Caco-2 (cell line): ENCODE measurements at regions of chr22 and their contacts with region 1.

Region 1: GRCh38 chr22:28829358-28830181 is 29.2 kb upstream of the XBP1 start:
- DNase-seq: peak; percentile 70 to 80
- H3K4me3 ChIP-seq: no peak overlapping the region
- H3K4me3 Mint-ChIP-seq: no peak overlapping the region
- H3K27ac Mint-ChIP-seq: no peak overlapping the region
- H3K4me1 ChIP-seq: 0 out of 2 replicates have a peak, but pooled peaks cover 5% of the 10 kb centered on the region
- H3K4me1 Mint-ChIP-seq: peaks cover 9% of the 10 kb centered on the region
- H3K27me3 ChIP-seq: no peaks in the 10 kb centered on the region
- H3K27me3 Mint-ChIP-seq: no peaks in the 10 kb centered on the region
- CTCF ChIP-seq: peak; percentile 93 to 97

Region 2: DNA sequence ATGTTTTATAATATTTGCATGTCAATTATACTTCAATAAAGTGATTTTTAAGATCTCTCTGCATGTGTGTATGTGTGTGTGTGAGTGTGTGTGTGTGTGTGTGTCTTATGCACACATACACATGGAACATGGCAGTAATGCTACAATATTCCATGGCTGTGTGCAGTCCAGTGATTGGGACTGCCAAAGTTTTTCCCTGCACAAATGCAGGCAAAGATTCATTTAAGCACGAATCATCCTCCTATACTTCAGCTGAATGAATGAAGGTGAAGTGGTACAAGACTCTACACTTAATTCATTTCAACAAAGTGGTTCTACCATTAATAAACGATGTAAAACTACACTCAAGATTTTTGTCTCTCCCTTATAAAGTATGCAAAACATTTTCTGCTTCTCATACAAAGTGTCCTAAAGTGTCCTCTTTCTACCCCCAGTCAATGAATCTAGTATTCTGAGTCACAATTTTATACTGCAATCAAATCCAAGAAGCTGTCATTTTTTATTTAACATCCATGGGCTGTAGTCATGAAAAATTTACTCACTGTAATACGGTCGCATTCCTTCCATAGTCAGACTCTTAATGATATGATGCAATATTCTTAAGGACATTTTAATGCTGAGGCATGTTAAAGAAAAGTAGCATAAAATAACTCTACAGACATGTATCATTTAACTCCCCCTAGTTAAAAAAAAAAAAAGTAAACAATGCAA is 282.3 kb before region 1 on chr22:
- CTCF ChIA-PET with region 1: no interaction called
- POLR2A ChIA-PET with region 1: no interaction called
- intact Hi-C with region 1: no loop called
- DNase-seq: no peak
- H3K4me3 ChIP-seq: no peak overlapping the region
- H3K4me3 Mint-ChIP-seq: no peak overlapping the region
- H3K27ac Mint-ChIP-seq: no peak overlapping the region
- H3K4me1 ChIP-seq: peaks cover 14% of the 10 kb centered on the region
- H3K4me1 Mint-ChIP-seq: peaks cover 22% of the 10 kb centered on the region
- H3K27me3 ChIP-seq: no peaks in the 10 kb centered on the region
- H3K27me3 Mint-ChIP-seq: no peaks in the 10 kb centered on the region
- CTCF ChIP-seq: no peak

Region 3: DNA sequence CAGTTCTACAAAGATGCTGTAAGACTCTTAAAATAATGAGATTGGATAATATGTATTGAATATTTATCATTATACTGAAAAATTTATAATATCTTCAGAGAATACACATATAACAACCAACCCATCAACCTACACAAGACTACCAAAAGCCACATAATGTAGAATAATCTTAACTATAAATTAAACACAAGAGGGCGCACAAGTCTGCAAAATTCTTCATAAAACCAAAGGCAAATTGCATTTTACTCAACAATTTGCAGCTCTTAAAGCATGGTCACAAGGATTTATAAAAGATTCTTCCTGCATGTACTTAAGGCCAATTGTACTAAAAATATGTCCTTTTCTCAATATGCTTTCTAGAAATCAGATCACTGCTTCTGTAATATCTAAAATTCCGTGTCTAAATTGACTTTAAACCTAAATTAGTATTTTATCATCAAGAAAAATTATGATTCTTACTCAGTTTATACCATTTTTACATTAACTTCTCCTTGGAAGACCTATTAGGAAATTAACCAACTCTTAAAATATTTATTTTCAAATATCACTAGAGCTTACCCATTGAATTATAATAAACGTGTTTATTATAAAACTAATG is 228.9 kb before region 1 on chr22:
- CTCF ChIA-PET with region 1: interaction called, 3 read pairs
- POLR2A ChIA-PET with region 1: no interaction called
- intact Hi-C with region 1: loop called (anchors 1 kb)
- DNase-seq: peak in 1 of 2 experiments; percentile 44
- H3K4me3 ChIP-seq: no peak overlapping the region
- H3K4me3 Mint-ChIP-seq: no peak overlapping the region
- H3K27ac Mint-ChIP-seq: no peak overlapping the region
- H3K4me1 ChIP-seq: no peaks in the 10 kb centered on the region
- H3K4me1 Mint-ChIP-seq: no peaks in the 10 kb centered on the region
- H3K27me3 ChIP-seq: no peaks in the 10 kb centered on the region
- H3K27me3 Mint-ChIP-seq: peaks cover 6% of the 10 kb centered on the region
- CTCF ChIP-seq: peak; percentile 41 to 66

Region 4: GRCh38 chr22:28741758-28742561 is 87.6 kb before region 1 on chr22 and contains the starts of genes CHEK2 and HSCB:
- CTCF ChIA-PET with region 1: no interaction called
- POLR2A ChIA-PET with region 1: no interaction called
- intact Hi-C with region 1: loop called (anchors 5 kb)
- DNase-seq: peak; percentile 98 to 99
- H3K4me3 ChIP-seq: peak within 1 kb of the TSS; percentile 72
- H3K4me3 Mint-ChIP-seq: peak within 1 kb of the TSS; percentile 90
- H3K27ac Mint-ChIP-seq: peak within 1 kb of the TSS; percentile 77
- H3K4me1 ChIP-seq: 0 out of 2 replicates have a peak, but pooled peaks cover 5% of the 10 kb centered on the region
- H3K4me1 Mint-ChIP-seq: peaks cover 14% of the 10 kb centered on the region
- H3K27me3 ChIP-seq: no peaks in the 10 kb centered on the region
- H3K27me3 Mint-ChIP-seq: no peaks in the 10 kb centered on the region
- CTCF ChIP-seq: peak in 1 of 2 experiments; percentile 20
- total RNA-seq, gene CHEK2: 34.0 and 38.0 TPM in 2 replicates
- total RNA-seq, gene HSCB: 8.2 and 11.4 TPM in 2 replicates

Region 5: DNA sequence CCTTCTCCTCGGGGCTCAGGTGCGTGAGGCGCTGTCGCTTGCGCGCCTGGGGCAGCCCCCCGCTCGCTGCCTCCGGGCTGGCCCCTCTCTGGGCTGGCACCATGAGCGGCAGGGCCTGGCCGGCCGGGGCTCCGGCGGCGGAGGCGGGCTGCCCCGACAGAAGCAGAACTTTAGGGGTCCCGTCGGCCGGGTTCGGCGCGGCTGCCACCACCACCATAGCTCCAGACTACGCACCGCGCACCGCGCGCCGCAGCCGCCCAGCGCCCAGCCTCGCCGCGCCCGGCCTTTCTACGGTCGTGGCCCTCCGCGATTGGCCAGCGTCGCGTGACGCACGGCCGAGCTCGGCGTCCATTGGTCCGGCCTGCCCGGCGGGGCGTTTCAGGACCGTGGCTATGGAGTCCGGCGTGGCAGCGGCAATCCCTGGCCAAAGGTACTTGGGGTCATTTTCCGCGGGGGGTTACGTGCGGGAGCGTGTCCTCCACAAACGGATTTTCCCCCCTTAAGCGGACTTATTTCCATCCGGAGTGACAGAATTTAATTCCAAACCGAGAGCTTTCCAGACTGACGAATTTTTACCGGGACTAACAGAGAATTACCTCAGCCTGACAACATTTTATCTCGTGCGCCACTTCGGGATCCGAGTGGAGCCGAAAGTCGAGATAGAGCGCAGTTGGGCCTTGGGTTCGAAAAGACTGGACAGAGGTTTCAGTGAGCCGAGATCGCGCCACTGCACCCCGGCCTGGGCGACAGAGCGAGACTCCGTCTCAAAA is 29.1 kb before region 1 on chr22 and contains the start of gene XBP1:
- CTCF ChIA-PET with region 1: interaction called, 11 read pairs
- POLR2A ChIA-PET with region 1: interaction called, 4 read pairs
- intact Hi-C with region 1: loop called (anchors 1 kb)
- DNase-seq: peak; percentile 92 to 96
- H3K4me3 ChIP-seq: peak within 1 kb of the TSS; percentile 94
- H3K4me3 Mint-ChIP-seq: peak within 1 kb of the TSS; percentile 93
- H3K27ac Mint-ChIP-seq: peak within 1 kb of the TSS; percentile 99
- H3K4me1 ChIP-seq: peaks cover 17% of the 10 kb centered on the region
- H3K4me1 Mint-ChIP-seq: peaks cover 19% of the 10 kb centered on the region
- H3K27me3 ChIP-seq: no peaks in the 10 kb centered on the region
- H3K27me3 Mint-ChIP-seq: no peaks in the 10 kb centered on the region
- CTCF ChIP-seq: no peak
- total RNA-seq, gene XBP1: 215 and 225 TPM in 2 replicates

Region 6: GRCh38 chr22:28810821-28811491 is 18.6 kb before region 1 on chr22:
- CTCF ChIA-PET with region 1: interaction called, 7 read pairs
- POLR2A ChIA-PET with region 1: no interaction called
- intact Hi-C with region 1: loop called (anchors 2 kb)
- DNase-seq: peak in 1 of 2 experiments; percentile 30
- H3K4me3 ChIP-seq: no peak overlapping the region
- H3K4me3 Mint-ChIP-seq: no peak overlapping the region
- H3K27ac Mint-ChIP-seq: peak overlapping the region; percentile 12
- H3K4me1 ChIP-seq: peaks cover 78% of the 10 kb centered on the region
- H3K4me1 Mint-ChIP-seq: peaks cover 33% of the 10 kb centered on the region
- H3K27me3 ChIP-seq: no peaks in the 10 kb centered on the region
- H3K27me3 Mint-ChIP-seq: no peaks in the 10 kb centered on the region
- CTCF ChIP-seq: no peak

Region 7: GRCh38 chr22:28817919-28818909 is 11.4 kb before region 1 on chr22:
- CTCF ChIA-PET with region 1: interaction called, 13 read pairs
- POLR2A ChIA-PET with region 1: no interaction called
- intact Hi-C with region 1: loop called (anchors 2 kb)
- DNase-seq: peak; percentile 84 to 86
- H3K4me3 ChIP-seq: no peak overlapping the region
- H3K4me3 Mint-ChIP-seq: peak overlapping the region; percentile 59
- H3K27ac Mint-ChIP-seq: peak overlapping the region; percentile 99
- H3K4me1 ChIP-seq: peaks cover 88% of the 10 kb centered on the region
- H3K4me1 Mint-ChIP-seq: peaks cover 65% of the 10 kb centered on the region
- H3K27me3 ChIP-seq: no peaks in the 10 kb centered on the region
- H3K27me3 Mint-ChIP-seq: no peaks in the 10 kb centered on the region
- CTCF ChIP-seq: no peak

Region 8: DNA sequence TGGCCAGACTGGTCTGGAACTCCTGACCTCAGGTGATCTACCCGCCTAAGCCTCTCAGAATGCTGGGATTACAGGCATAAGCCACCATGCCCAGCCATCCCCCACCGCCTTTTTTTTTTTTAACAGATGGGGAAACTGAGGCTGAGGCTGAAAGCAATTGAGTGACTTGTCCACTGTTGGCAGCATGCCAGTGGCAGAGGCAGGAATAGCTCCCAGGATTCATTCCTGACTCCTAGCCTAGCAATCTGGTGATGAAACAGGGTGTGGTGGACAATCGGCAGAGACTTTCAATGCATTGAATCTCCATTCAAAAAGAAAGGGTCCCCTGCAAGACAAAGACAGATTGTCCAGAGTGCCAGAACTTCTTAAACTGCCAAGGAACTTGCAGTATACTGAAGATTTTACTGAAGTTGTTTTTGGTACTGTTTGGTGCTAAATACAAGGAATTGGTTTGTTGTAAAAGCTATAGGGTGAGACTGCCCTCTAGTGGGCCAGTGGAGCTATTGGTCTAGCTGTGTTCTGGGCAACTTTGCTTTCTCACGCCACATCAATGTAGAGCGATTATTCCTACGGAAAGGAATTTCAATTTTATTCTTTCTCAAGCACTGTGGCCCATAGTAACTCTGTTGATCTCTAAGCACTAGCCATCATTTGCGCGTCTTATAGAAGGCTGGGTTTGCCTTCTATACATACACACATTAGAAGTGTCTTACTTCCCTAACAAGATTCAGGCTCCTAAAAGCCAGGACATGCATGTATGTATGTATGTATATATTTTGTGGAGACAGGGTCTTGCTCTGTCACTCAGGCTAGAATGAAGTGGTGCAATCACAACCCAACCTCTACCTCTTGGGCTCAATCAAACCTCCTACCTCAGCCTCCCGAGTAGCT is 211.1 kb after region 1 on chr22:
- CTCF ChIA-PET with region 1: interaction called, 10 read pairs
- POLR2A ChIA-PET with region 1: no interaction called
- intact Hi-C with region 1: no loop called
- DNase-seq: peak; percentile 56 to 63
- H3K4me3 ChIP-seq: no peak overlapping the region
- H3K4me3 Mint-ChIP-seq: no peak overlapping the region
- H3K27ac Mint-ChIP-seq: no peak overlapping the region
- H3K4me1 ChIP-seq: peaks cover 38% of the 10 kb centered on the region
- H3K4me1 Mint-ChIP-seq: peaks cover 7% of the 10 kb centered on the region
- H3K27me3 ChIP-seq: no peaks in the 10 kb centered on the region
- H3K27me3 Mint-ChIP-seq: no peaks in the 10 kb centered on the region
- CTCF ChIP-seq: peak; percentile 90 to 93